ENCODE measurements at regions of chr3 and their contacts with region 1.

Region 1: DNA sequence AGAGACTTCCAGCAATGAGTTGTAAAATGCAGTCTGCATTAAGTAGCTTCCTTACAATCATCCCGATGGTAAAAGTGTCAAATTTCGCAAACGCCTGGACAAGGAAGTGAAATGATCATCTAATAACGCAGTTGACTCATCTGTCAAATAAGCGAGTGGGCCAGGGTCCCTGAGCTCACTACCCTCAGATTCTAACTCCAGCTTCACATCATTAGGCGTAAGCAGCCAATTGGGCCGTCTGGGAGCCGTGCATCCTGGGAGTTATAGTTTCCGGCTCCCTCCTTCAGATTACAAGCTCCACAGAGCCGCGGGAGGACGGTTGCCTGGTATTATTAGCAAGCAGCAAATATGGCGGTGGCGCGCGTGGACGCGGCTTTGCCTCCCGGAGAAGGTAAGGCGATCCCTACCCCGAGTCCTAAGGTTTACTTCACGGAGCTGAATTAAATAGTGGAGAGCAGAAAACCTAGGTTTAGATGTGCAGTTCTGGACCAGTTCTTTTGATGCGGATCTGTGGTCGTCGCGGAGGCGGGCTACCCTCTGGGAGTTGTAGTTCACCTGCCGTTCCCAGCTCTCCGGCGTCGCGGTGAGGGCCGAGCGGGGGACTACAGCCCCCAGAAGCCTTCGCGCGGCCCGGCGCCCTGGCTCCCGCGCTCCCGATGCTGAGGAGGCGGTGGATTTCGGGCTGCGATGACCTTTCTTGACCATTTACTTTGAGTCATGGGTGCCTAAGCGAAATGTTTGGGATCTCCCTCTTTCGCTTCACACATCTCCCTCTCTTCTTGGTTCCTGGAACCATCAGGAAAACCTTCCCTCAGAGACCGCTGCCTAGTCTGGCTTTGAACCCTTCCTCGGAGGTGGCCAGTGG is at the start of gene CEP97:
- DNase-seq: peak; percentile 95
- ATAC-seq: peak; percentile 93
- H3K4me3 Mint-ChIP-seq: peak within 1 kb of the TSS; percentile 97
- H3K27ac Mint-ChIP-seq: peak within 1 kb of the TSS; percentile 97
- H3K4me1 Mint-ChIP-seq: peaks cover 46% of the 10 kb centered on the region
- H3K27me3 Mint-ChIP-seq: no peaks in the 10 kb centered on the region
- total RNA-seq, gene CEP97: 18.1 to 20.0 TPM

Region 2: GRCh38 chr3:101292027-101292426 is 432.5 kb before region 1 on chr3:
- CTCF ChIA-PET with region 1: no interaction called
- POLR2A ChIA-PET with region 1: no interaction called
- intact Hi-C with region 1: no loop called
- DNase-seq: no peak
- ATAC-seq: no peak
- H3K4me3 Mint-ChIP-seq: no peak overlapping the region
- H3K27ac Mint-ChIP-seq: no peak overlapping the region
- H3K4me1 Mint-ChIP-seq: no peaks in the 10 kb centered on the region
- H3K27me3 Mint-ChIP-seq: no peaks in the 10 kb centered on the region

Region 3: GRCh38 chr3:101512646-101513418 is 211.7 kb before region 1 on chr3 and contains the start of gene SENP7:
- CTCF ChIA-PET with region 1: no interaction called
- POLR2A ChIA-PET with region 1: no interaction called
- intact Hi-C with region 1: loop called in 1 of 2 experiments (anchors 1 kb)
- DNase-seq: peak; percentile 88
- ATAC-seq: peak; percentile 49
- H3K4me3 Mint-ChIP-seq: peak within 1 kb of the TSS; percentile 85
- H3K27ac Mint-ChIP-seq: peak within 1 kb of the TSS; percentile 96
- H3K4me1 Mint-ChIP-seq: peaks cover 53% of the 10 kb centered on the region
- H3K27me3 Mint-ChIP-seq: no peaks in the 10 kb centered on the region
- total RNA-seq, gene SENP7: 12.3 to 12.9 TPM

Region 4: GRCh38 chr3:101676765-101677435 is 47.7 kb before region 1 on chr3 and contains the start of gene ZBTB11:
- CTCF ChIA-PET with region 1: interaction called, 4 read pairs
- POLR2A ChIA-PET with region 1: interaction called, 13 read pairs
- intact Hi-C with region 1: loop called (anchors 1 kb)
- DNase-seq: peak; percentile 100
- ATAC-seq: peak; percentile 78
- H3K4me3 Mint-ChIP-seq: peak within 1 kb of the TSS; percentile 94
- H3K27ac Mint-ChIP-seq: peak within 1 kb of the TSS; percentile 92
- H3K4me1 Mint-ChIP-seq: peaks cover 52% of the 10 kb centered on the region
- H3K27me3 Mint-ChIP-seq: no peaks in the 10 kb centered on the region
- total RNA-seq, gene ZBTB11: 25.1 to 26.0 TPM

Region 5: DNA sequence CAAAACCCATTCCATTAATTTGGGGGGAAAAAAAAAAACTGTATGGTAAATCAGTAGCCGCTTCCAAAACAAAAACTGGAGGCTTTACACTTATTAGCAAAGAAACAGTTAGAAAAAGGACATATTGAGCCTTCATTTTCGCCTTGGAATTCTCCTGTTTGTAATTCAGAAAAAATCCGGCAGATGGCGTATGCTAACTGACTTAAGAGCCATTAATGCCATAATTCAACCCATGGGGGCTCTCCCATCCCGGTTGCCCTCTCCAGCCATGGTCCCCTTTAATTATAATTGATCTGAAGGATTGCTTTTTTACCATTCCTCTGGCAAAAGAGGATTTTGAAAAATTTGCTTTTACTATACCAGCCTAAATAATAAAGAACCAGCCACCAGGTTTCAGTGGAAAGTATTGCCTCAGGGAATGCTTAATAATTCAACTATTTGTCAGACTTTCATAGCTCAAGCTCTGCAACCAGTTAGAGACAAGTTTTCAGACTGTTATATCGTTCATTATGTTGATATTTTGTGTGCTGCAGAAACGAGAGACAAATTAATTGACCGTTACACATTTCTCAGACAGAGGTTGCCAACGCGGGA is 28.7 kb before region 1 on chr3:
- CTCF ChIA-PET with region 1: interaction called, 3 read pairs
- POLR2A ChIA-PET with region 1: no interaction called
- intact Hi-C with region 1: loop called in 1 of 2 experiments (anchors 1 kb)
- DNase-seq: peak; percentile 48
- ATAC-seq: no peak
- H3K4me3 Mint-ChIP-seq: no peak overlapping the region
- H3K27ac Mint-ChIP-seq: no peak overlapping the region
- H3K4me1 Mint-ChIP-seq: peaks cover 7% of the 10 kb centered on the region
- H3K27me3 Mint-ChIP-seq: no peaks in the 10 kb centered on the region